Colonic mucosa (tissue), 4 donors: ENCODE measurements at regions of chr1 and their contacts with region 1.

Region 1: DNA sequence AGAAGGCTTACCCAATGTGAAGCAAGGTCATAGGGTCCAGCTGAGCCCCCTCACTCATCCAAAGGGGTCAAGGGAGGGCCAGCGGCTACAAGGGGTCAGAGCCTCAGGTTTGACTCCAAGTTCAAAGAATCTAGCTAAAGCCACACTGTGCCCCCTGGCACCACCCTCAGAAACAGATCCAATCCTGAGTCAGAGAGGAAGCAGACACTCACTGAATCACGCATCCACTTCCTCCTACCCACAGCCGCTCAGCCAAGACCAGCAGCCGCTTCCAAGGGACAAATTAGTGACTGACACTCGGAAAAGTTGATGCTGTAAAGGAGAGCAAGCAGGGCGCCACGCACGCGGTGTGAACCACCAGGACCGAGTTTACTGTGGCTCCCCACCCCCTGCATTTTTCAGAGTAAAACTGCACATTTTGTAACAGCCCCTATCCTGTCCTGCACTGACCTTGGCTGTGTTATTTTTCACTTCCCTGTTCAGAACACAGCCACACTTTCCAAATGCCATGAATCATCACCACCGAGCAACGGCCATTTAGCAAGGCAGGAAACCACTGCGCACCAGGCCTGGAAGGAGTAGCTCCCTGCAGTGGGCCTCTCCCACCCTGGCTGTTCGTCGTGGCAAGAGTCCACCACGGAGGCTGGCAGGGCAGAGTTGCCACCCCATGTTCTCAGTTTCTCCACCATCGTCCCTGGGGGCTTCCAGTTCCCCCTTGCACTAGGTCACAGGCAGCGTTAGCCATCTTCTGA is 147.8 kb downstream of the TOMM20 start:
- DNase-seq: peak; percentile 67
- H3K4me3 ChIP-seq: no peak overlapping the region
- H3K27ac ChIP-seq: peak overlapping the region; percentile 90
- H3K4me1 ChIP-seq: peaks cover 29% of the 10 kb centered on the region
- H3K27me3 ChIP-seq: no peaks in the 10 kb centered on the region
- CTCF ChIP-seq: no peak

Region 2: DNA sequence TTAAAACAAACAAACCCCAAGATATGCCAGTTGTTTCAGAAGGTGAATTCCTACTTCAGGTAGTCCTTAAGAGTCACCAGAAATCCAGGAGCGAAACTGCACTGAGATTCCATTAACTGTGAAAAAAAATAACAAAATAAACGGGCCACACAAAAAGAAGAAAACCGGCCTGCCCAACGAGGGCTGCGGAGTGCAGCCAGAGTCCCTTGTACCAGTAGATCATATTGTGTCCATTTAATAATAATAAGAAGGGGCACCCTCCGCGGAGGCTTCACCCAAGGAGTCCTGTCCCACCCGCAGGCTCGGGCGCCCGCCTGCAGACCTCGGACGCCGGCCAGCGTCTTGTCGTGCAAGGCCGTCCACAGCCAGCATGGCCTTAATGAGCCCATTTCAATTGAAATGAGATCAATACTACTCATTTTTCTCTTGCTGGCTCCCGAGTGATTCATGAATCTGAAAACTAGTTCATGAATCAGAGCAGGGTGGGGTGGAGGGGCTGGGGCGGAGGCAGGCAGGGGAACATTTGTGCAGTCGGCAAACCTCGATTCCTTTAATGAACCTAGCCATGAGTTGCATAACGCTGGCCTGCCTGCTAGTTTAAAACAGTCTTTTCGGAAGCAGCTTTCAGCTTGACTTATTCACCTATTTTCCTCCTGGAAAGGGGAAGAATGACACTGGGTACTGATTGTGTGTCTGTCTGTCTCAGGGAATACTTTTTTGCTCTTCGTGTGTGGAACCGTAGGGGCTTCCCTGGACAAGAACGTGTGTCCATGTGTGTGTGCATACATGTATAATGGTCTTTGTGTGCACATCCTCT is 257.7 kb before region 1 on chr1:
- intact Hi-C with region 1: loop called (anchors 10 kb)
- DNase-seq: peak; percentile 65
- H3K4me3 ChIP-seq: no peak overlapping the region
- H3K27ac ChIP-seq: peak overlapping the region; percentile 99
- H3K4me1 ChIP-seq: peaks cover 44% of the 10 kb centered on the region
- H3K27me3 ChIP-seq: no peaks in the 10 kb centered on the region
- CTCF ChIP-seq: no peak